Body of pancreas (tissue), 4 donors: ENCODE measurements at regions of chr4 and their contacts with region 1.

Region 1: DNA sequence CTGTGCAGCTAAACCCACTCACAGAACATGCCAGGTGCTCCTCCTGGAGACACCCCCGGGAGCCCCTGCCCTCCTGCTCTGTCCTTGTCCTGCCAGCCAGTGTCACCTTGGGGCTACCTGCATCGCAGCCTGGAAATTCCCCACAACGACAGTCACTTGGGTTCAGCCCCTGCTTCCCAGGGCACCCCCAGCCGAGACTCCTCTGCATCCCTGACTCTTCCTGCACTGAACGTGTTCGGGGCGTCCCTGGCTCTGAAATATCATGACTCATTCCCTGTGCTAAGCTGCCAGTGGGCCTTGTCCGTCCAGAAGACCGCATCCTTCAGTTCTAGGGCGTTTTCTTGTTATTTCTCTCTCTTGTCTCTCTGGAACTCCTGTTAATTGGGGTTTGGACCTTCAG is 5.8 kb downstream of the CFAP99 start:
- DNase-seq: no peak
- ATAC-seq: no peak
- H3K4me3 ChIP-seq: no peak overlapping the region
- H3K27ac ChIP-seq: no peak overlapping the region
- H3K4me1 ChIP-seq: peaks cover 1% of the 10 kb centered on the region
- H3K27me3 ChIP-seq: no peaks in the 10 kb centered on the region
- CTCF ChIP-seq: no peak
- POLR2A ChIP-seq: no peak

Region 2: DNA sequence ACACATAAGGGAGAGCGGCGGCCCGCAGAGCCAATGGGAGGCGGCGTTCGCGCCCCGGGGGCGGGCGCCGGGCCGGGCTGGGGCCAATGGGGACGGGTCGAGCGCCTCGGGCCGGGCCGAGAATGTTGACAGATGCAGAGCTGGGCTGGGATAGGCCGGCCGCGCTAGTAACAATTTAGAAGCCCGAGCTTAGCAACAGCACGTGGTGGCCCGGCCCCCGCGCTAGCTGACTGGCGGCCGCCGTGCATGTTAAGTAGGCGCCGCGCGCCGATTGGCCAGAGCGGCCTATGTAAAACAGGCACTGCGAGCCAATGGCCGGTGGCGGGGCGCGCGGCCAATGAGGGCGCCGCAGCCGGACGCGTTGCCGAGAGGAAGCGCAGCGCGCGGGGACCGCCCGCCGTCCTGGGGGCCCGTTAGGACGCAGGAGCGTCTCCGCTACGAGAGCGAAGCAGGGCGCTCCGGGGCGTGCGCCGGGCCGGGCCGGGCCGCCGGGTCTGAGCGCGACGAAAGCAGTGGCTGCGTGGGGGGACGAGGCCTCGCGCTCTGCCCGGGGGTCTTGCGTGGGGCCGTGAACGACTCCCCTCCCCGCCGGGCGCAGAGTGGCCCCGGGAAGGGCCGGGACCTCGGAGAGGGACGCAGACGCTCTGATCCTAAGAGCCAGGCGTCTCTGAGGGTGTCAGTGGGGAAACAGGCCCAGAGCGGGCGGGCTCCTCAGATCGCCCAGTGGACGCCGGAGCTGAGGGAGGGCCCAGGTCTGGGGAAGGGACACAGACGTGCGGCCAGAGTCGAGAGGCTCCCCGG is 162.2 kb before region 1 on chr4:
- intact Hi-C with region 1: loop called (anchors 10 kb)
- DNase-seq: peak; percentile 99 to 100 (median 100)
- ATAC-seq: peak; percentile 94
- H3K4me3 ChIP-seq: peak overlapping the region; percentile 4 to 30
- H3K27ac ChIP-seq: peak overlapping the region; percentile 75 to 91 (median 89)
- H3K4me1 ChIP-seq: peaks cover 53% of the 10 kb centered on the region
- H3K27me3 ChIP-seq: no peaks in the 10 kb centered on the region
- CTCF ChIP-seq: no peak
- POLR2A ChIP-seq: peak; percentile 83 to 87 (median 84)

Region 3: GRCh38 chr4:2526559-2526958 is 102.0 kb after region 1 on chr4:
- intact Hi-C with region 1: no loop called
- DNase-seq: no peak
- ATAC-seq: no peak
- H3K4me3 ChIP-seq: no peak overlapping the region
- H3K27ac ChIP-seq: no peak overlapping the region
- H3K4me1 ChIP-seq: no peaks in the 10 kb centered on the region
- H3K27me3 ChIP-seq: no peaks in the 10 kb centered on the region
- CTCF ChIP-seq: no peak
- POLR2A ChIP-seq: no peak

Region 4: DNA sequence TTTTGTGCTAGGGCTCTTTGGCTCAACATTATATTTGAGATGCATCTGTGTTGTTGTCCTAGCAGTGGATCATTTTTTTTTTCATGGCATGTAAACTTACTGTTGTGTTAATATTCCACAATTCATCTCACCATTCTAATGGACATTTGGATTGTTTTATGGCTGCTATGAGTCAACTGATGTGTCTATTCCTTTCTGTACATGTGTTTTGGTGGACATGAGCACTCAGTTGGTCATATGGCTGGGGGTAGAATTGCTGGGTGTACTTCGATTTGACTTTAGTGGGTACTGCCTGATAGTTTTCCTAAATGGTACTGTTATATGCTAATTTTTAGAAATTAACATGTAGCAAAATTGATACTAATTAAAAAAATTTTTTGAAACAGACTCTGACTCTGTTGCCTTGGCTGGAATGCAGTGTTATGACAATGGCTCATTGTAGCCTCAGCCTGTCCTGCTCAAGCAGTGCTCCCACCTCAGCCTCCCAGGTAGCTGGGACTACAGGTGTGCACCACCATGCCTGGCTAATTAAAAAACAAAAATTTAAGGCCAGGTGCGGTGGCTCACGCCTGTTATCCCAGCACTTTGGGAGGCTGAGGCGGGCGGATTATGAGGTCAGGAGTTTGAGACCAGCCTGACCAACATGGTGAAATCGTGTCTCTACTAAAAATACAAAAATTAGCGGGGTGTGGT is 120.9 kb after region 1 on chr4:
- intact Hi-C with region 1: no loop called
- DNase-seq: no peak
- ATAC-seq: no peak
- H3K4me3 ChIP-seq: no peak overlapping the region
- H3K27ac ChIP-seq: no peak overlapping the region
- H3K4me1 ChIP-seq: peaks cover 14% of the 10 kb centered on the region
- H3K27me3 ChIP-seq: no peaks in the 10 kb centered on the region
- CTCF ChIP-seq: no peak
- POLR2A ChIP-seq: no peak

Region 5: GRCh38 chr4:2583517-2583916 is 158.9 kb after region 1 on chr4:
- intact Hi-C with region 1: no loop called
- DNase-seq: peak in 1 of 4 donors; percentile 43
- ATAC-seq: peak; percentile 83
- H3K4me3 ChIP-seq: no peak overlapping the region
- H3K27ac ChIP-seq: peak overlapping the region in 3 of 4 donors; percentile 10 to 39 (median 26)
- H3K4me1 ChIP-seq: peaks cover 32% of the 10 kb centered on the region
- H3K27me3 ChIP-seq: no peaks in the 10 kb centered on the region
- CTCF ChIP-seq: peak in 2 of 7 experiments; percentile 12 to 21
- POLR2A ChIP-seq: no peak